H1 (cell line): ENCODE measurements at regions of chr11 and their contacts with region 1.

Region 1: GRCh38 chr11:14422052-14422813 is 63.2 kb upstream of the RRAS2 start:
- DNase-seq: peak; percentile 67 to 90
- H3K4me3 ChIP-seq: peak overlapping the region in 2 of 4 experiments; percentile 10 to 37; a peak in 4 of 8 replicates
- H3K27ac ChIP-seq: no peak overlapping the region
- H3K4me1 ChIP-seq: peaks cover 7 to 12% (median 9%) of the 10 kb centered on the region in 4 experiments
- H3K27me3 ChIP-seq: no peaks in the 10 kb centered on the region
- CTCF ChIP-seq: no peak
- EP300 ChIP-seq: no peak
- POLR2A ChIP-seq: no peak
- RAD21 ChIP-seq: 0 out of 4 replicates have a peak, but pooled peaks of 1 of the 2 experiments have one; percentile 7

Region 2: DNA sequence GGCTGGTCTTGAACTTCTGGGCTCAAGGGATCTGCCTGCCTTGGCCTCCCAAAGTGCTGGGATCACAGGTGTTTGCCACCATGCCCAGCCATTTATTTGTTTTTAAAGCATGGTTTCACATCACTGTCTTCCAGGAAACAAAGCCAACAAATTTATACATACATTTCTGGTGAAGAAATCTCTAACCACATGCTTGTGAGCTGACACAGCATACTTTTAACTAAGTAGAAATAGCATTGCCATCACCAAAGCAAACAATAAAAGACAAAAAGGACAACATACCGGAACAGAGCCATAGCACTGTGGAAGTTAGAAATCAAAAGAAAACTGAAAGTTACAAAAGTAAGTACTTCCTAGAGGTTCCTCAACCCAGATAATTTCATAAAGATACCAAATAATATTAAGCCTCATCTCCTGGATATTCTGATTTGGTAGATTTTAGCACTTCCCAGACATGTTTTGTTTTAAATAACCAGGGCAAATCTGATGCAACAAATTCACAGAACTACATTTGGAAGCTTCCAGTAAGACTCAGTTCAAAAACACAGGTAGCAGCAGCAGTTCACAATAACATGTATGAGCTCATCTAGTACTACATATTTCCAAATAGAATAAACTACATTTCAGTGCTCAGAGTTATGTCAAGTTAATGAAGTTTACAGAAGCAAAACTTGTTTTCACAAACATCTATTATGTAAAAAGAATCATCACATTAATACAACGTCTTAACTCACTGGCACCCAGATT is 133.9 kb before region 1 on chr11:
- CTCF ChIA-PET with region 1: interaction called, 30 read pairs
- POLR2A ChIA-PET with region 1: interaction called, 4 read pairs
- DNase-seq: no peak
- H3K4me3 ChIP-seq: no peak overlapping the region
- H3K27ac ChIP-seq: no peak overlapping the region
- H3K4me1 ChIP-seq: no peaks in the 10 kb centered on the region
- H3K27me3 ChIP-seq: no peaks in the 10 kb centered on the region
- CTCF ChIP-seq: no peak
- EP300 ChIP-seq: no peak
- POLR2A ChIP-seq: no peak
- RAD21 ChIP-seq: no peak

Region 3: DNA sequence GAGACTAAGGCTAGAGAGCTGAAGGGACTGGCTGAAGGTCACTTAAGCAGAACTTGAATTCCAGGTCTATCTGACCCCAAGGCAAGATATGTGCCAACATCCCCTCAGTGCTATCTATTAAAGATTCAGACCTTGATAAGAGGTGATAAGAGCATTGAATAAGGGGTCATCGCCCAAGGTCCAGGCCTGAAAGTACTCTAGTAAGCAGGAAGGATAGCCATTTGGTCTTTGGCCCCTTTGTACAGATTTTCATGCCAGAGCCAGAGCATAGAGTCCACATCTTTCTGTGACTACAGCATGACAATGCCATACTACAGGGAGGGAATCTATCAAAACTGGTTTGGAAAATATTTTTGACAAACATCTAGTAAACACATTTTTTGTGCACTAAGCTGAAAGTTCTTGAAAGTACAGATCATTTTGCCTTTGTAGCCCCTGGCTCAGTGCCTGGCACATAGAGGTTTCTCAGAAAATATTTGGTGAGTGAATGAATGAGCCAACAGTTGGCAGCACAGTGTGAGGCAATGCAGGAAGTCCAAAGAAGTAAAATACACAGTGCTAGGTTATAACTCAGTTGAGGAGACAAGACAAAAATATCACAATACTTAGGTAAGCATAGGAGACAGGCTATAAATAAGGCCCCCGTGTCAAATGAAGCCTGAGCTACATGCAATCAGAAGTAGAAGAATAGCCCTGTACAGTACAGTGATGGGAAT is 48.1 kb before region 1 on chr11:
- CTCF ChIA-PET with region 1: interaction called, 26 read pairs
- POLR2A ChIA-PET with region 1: no interaction called
- DNase-seq: peak in 1 of 2 experiments; percentile 20
- H3K4me3 ChIP-seq: no peak overlapping the region
- H3K27ac ChIP-seq: no peak overlapping the region
- H3K4me1 ChIP-seq: peaks cover 0 to 8% (median 3%) of the 10 kb centered on the region in 4 experiments; a peak in 3 of 7 replicates
- H3K27me3 ChIP-seq: no peaks in the 10 kb centered on the region
- CTCF ChIP-seq: no peak
- EP300 ChIP-seq: no peak
- POLR2A ChIP-seq: no peak
- RAD21 ChIP-seq: no peak

Region 4: GRCh38 chr11:14386895-14387480 is 35.2 kb before region 1 on chr11:
- CTCF ChIA-PET with region 1: interaction called, 16 read pairs
- POLR2A ChIA-PET with region 1: no interaction called
- DNase-seq: peak; percentile 15 to 66
- H3K4me3 ChIP-seq: no peak overlapping the region
- H3K27ac ChIP-seq: no peak overlapping the region
- H3K4me1 ChIP-seq: peaks cover 0 to 9% (median 3%) of the 10 kb centered on the region in 4 experiments; a peak in 2 of 7 replicates
- H3K27me3 ChIP-seq: peaks cover 0 to 4% (median 1%) of the 10 kb centered on the region in 4 experiments; a peak in 4 of 7 replicates
- CTCF ChIP-seq: no peak
- EP300 ChIP-seq: no peak
- POLR2A ChIP-seq: no peak
- RAD21 ChIP-seq: no peak

Region 5: DNA sequence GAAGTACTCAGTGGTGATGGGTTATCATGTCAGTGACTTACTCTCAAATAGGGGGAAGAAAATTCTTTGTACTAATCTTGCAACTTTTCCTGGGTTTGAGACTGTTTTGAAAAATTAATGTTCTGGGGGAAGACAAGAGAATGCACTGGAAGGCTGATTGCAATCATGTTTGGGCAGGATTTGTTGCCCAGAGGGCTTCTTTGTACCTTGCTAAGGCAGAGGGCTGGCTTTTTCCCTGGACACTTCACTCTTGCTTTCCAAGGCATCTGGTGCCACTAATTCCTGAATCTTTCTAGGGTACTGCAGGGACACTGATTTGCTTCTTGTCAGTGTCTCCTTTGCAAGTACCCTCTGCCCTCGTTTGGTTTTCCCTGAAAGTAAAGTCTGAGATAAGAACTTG is 23.9 kb before region 1 on chr11:
- CTCF ChIA-PET with region 1: interaction called, 46 read pairs
- POLR2A ChIA-PET with region 1: interaction called, 4 read pairs
- DNase-seq: no peak
- H3K4me3 ChIP-seq: no peak overlapping the region
- H3K27ac ChIP-seq: no peak overlapping the region
- H3K4me1 ChIP-seq: no peaks in the 10 kb centered on the region
- H3K27me3 ChIP-seq: no peaks in the 10 kb centered on the region
- CTCF ChIP-seq: no peak
- EP300 ChIP-seq: no peak
- POLR2A ChIP-seq: no peak
- RAD21 ChIP-seq: no peak

Region 6: GRCh38 chr11:14443638-14444037 is 21.4 kb after region 1 on chr11:
- CTCF ChIA-PET with region 1: interaction called, 21 read pairs
- POLR2A ChIA-PET with region 1: no interaction called
- DNase-seq: no peak
- H3K4me3 ChIP-seq: no peak overlapping the region
- H3K27ac ChIP-seq: no peak overlapping the region
- H3K4me1 ChIP-seq: no peaks in the 10 kb centered on the region
- H3K27me3 ChIP-seq: no peaks in the 10 kb centered on the region
- CTCF ChIP-seq: no peak
- EP300 ChIP-seq: no peak
- POLR2A ChIP-seq: no peak
- RAD21 ChIP-seq: no peak